ENCODE measurements at regions of chr15 and their contacts with region 1.

Region 1: DNA sequence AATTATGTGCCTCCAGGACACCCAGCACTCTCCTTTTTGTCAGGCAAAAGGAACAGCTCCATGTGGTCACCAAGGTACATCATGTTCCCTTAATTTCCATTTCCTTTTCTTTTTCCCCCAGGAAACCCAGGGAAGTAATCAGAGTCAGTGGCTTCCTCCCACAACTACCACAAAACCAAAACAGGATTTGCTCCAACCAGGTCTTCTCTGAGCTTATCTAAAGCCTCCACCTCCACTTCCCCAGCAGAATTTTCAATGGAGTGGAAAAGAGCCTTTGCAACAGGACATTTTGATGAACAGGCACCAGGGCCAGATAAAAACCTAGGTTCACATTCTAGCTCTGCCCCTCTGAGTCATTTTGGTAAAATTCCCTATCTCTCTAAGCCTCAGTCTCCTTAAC is 154.3 kb downstream of the NR2F2 start:
- DNase-seq: no peak
- H3K4me3 Mint-ChIP-seq: no peak overlapping the region
- H3K27ac Mint-ChIP-seq: no peak overlapping the region
- H3K4me1 Mint-ChIP-seq: no peaks in the 10 kb centered on the region
- H3K27me3 Mint-ChIP-seq: no peaks in the 10 kb centered on the region
- CTCF ChIP-seq: no peak

Region 2: GRCh38 chr15:95799286-95800200 is 685.3 kb before region 1 on chr15:
- CTCF ChIA-PET with region 1: interaction called, 10 read pairs
- intact Hi-C with region 1: no loop called
- DNase-seq: no peak
- H3K4me3 Mint-ChIP-seq: no peak overlapping the region
- H3K27ac Mint-ChIP-seq: no peak overlapping the region
- H3K4me1 Mint-ChIP-seq: peaks cover 21% of the 10 kb centered on the region
- H3K27me3 Mint-ChIP-seq: no peaks in the 10 kb centered on the region
- CTCF ChIP-seq: no peak

Region 3: GRCh38 chr15:96500508-96500907 is 15.7 kb after region 1 on chr15:
- CTCF ChIA-PET with region 1: no interaction called
- intact Hi-C with region 1: no loop called
- DNase-seq: no peak
- H3K4me3 Mint-ChIP-seq: no peak overlapping the region
- H3K27ac Mint-ChIP-seq: no peak overlapping the region
- H3K4me1 Mint-ChIP-seq: no peaks in the 10 kb centered on the region
- H3K27me3 Mint-ChIP-seq: no peaks in the 10 kb centered on the region
- CTCF ChIP-seq: no peak